B cell (primary cell): ENCODE measurements at regions of chr22 and their contacts with region 1.

Region 1: GRCh38 chr22:21629262-21630149 is at the start of gene YDJC:
- DNase-seq: peak; percentile 96
- ATAC-seq: peak; percentile 86
- H3K4me3 ChIP-seq: peak within 1 kb of the TSS; percentile 6 to 100 (median 99)
- H3K4me3 Mint-ChIP-seq: peak within 1 kb of the TSS; percentile 94
- H3K27ac ChIP-seq: peak within 1 kb of the TSS; percentile 91 to 92
- H3K27ac Mint-ChIP-seq: peak within 1 kb of the TSS; percentile 94
- H3K4me1 ChIP-seq: peaks cover 23 to 40% of the 10 kb centered on the region in 2 donors
- H3K4me1 Mint-ChIP-seq: peaks cover 46% of the 10 kb centered on the region
- H3K27me3 ChIP-seq: no peaks in the 10 kb centered on the region
- H3K27me3 Mint-ChIP-seq: no peaks in the 10 kb centered on the region
- CTCF ChIP-seq: peak; percentile 61
- total RNA-seq, gene YDJC: 46.6 and 48.8 TPM in 2 replicates

Region 2: DNA sequence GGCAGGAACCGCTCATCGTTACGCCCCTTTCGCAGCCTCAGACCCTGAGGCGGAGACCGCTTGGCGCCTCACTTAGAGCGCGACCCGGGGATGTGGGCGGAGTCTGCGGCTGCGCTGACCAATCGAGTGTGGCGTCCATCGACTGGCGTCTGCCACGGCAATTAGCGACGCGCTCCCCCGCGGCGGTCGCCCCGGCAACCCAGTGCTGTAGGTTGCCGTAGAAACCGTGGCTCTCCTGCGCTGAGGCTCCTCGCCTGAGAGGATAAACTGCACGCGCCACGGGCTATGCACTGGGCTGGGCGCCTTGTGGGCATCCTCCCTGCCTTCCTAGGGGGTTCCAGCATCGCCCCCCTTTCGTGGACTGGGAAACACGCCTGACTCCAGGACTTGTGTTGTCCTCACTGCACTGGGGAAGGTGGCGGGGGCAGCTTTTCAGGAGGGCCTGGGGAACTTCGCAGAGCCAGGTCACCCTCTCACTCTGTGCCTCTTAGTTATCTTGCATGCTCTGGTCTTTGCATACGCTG is 615.2 kb before region 1 on chr22:
- CTCF ChIA-PET with region 1: no interaction called
- POLR2A ChIA-PET with region 1: interaction called, 11 read pairs
- intact Hi-C with region 1: no loop called
- DNase-seq: peak; percentile 95
- ATAC-seq: peak; percentile 95
- H3K4me3 ChIP-seq: peak overlapping the region in 4 of 5 experiments; percentile 45 to 57 (median 52)
- H3K4me3 Mint-ChIP-seq: peak overlapping the region; percentile 94
- H3K27ac ChIP-seq: peak overlapping the region; percentile 73 to 74
- H3K27ac Mint-ChIP-seq: peak overlapping the region; percentile 91
- H3K4me1 ChIP-seq: peaks cover 14 to 24% of the 10 kb centered on the region in 2 donors
- H3K4me1 Mint-ChIP-seq: peaks cover 24% of the 10 kb centered on the region
- H3K27me3 ChIP-seq: no peaks in the 10 kb centered on the region
- H3K27me3 Mint-ChIP-seq: no peaks in the 10 kb centered on the region
- CTCF ChIP-seq: no peak

Region 3: GRCh38 chr22:21567456-21568346 is 61.8 kb before region 1 on chr22 and contains the start of gene UBE2L3:
- CTCF ChIA-PET with region 1: interaction called, 5 read pairs
- POLR2A ChIA-PET with region 1: no interaction called
- intact Hi-C with region 1: loop called (anchors 1 kb)
- DNase-seq: peak; percentile 90
- ATAC-seq: peak; percentile 92
- H3K4me3 ChIP-seq: peak within 1 kb of the TSS; percentile 70 to 91 (median 76)
- H3K4me3 Mint-ChIP-seq: peak within 1 kb of the TSS; percentile 90
- H3K27ac ChIP-seq: peak within 1 kb of the TSS; percentile 81 to 93
- H3K27ac Mint-ChIP-seq: peak within 1 kb of the TSS; percentile 84
- H3K4me1 ChIP-seq: peaks cover 27 to 34% of the 10 kb centered on the region in 2 donors
- H3K4me1 Mint-ChIP-seq: peaks cover 35% of the 10 kb centered on the region
- H3K27me3 ChIP-seq: no peaks in the 10 kb centered on the region
- H3K27me3 Mint-ChIP-seq: no peaks in the 10 kb centered on the region
- CTCF ChIP-seq: no peak
- total RNA-seq, gene UBE2L3: 28.6 and 30.9 TPM in 2 replicates

Region 4: DNA sequence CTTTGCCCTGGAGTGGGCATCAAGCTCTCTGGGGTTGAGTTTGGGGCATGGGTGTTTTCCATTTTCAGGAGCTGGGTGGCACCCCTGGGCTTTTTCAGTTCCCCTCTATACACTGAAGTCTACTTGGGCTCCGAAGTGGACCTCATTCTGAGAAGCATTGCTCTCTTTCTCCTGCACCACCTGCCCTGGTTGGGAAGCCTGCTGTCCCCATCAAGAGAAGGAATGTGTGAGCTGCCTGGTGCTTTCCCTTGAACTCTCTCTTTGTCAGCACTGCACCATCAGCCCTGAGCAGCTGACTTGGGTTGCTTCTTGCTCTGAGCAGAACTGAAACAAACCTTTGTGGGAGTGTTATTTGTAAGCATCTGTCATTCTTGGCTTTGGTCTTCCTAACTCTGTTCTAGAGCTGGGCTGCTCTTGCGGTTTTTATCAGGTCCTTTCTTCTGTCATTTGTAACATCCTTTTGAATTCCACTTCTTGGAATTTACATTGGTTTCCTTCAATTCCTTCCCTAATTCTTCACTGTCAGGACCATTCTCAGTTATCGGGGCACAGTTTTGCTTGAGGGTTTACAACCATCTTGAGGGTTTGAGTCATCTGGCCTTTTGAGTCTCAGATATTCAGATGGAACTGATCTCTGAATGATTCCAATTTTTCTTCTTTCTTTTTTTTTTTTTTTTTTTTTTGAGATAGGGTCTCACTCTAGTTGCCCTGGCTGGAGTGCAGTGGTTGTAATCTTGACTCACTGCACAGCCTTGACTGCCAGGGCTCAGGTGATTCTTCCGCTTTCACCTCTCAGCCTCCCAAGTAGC is 41.5 kb before region 1 on chr22:
- CTCF ChIA-PET with region 1: interaction called, 12 read pairs
- POLR2A ChIA-PET with region 1: interaction called, 3 read pairs
- intact Hi-C with region 1: loop called (anchors 5 kb)
- DNase-seq: peak; percentile 74
- ATAC-seq: peak; percentile 76
- H3K4me3 ChIP-seq: peak overlapping the region in 1 of 5 experiments; percentile 33
- H3K4me3 Mint-ChIP-seq: peak overlapping the region; percentile 76
- H3K27ac ChIP-seq: peak overlapping the region; percentile 60 to 63
- H3K27ac Mint-ChIP-seq: peak overlapping the region; percentile 86
- H3K4me1 ChIP-seq: peaks cover 36 to 50% of the 10 kb centered on the region in 2 donors
- H3K4me1 Mint-ChIP-seq: peaks cover 58% of the 10 kb centered on the region
- H3K27me3 ChIP-seq: no peaks in the 10 kb centered on the region
- H3K27me3 Mint-ChIP-seq: no peaks in the 10 kb centered on the region
- CTCF ChIP-seq: no peak

Region 5: DNA sequence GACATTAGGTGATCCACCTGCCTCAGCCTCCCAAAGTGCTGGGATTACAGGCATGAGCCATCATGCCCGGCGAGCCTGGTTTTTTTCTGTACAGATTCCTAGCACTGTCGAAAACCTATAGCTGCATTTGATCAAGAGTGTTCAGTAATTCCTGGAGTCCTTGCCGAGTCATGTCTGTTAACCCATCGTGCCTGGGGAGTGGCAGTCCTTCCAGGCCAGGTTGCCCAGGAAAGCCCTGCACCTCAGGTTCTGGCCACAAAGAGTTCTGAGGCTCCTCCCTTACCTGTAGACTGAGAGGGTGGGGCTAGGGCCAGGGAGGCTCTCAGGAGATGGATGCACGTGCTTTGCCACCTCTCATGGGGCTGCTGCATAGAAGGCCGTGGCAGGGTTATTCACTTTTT is 16.6 kb before region 1 on chr22:
- CTCF ChIA-PET with region 1: interaction called, 21 read pairs
- POLR2A ChIA-PET with region 1: interaction called, 10 read pairs
- intact Hi-C with region 1: no loop called
- DNase-seq: no peak
- ATAC-seq: no peak
- H3K4me3 ChIP-seq: no peak overlapping the region
- H3K4me3 Mint-ChIP-seq: no peak overlapping the region
- H3K27ac ChIP-seq: no peak overlapping the region
- H3K27ac Mint-ChIP-seq: peak overlapping the region; percentile 26
- H3K4me1 ChIP-seq: peaks cover 12 to 33% of the 10 kb centered on the region in 2 donors
- H3K4me1 Mint-ChIP-seq: peaks cover 41% of the 10 kb centered on the region
- H3K27me3 ChIP-seq: no peaks in the 10 kb centered on the region
- H3K27me3 Mint-ChIP-seq: no peaks in the 10 kb centered on the region
- CTCF ChIP-seq: no peak

Region 6: DNA sequence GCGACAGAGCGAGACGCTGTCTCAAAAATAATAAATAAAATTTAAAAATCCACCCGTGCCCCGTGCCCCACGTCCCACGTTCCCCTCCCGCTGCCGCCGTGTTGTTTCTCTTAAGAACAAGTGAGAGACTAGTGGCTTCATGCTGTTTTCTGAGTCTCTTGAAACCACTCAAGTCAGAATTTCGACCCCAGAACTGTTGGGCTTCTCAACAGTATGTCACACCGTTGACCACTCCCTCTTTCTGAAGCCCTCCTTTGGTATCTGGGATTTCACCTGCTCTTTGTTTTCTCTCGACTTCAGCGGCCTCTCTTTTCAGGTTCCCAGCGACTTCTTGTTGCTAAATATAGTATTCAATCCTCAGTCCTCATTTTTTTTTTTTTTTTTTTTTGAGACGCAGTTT is 37.3 kb after region 1 on chr22:
- CTCF ChIA-PET with region 1: interaction called, 6 read pairs
- POLR2A ChIA-PET with region 1: interaction called, 12 read pairs
- intact Hi-C with region 1: loop called (anchors 1 kb)
- DNase-seq: no peak
- ATAC-seq: no peak
- H3K4me3 ChIP-seq: peak overlapping the region in 4 of 5 experiments; percentile 77 to 96 (median 90)
- H3K4me3 Mint-ChIP-seq: peak overlapping the region; percentile 96
- H3K27ac ChIP-seq: peak overlapping the region in 1 of 2 donors; percentile 92
- H3K27ac Mint-ChIP-seq: peak overlapping the region; percentile 69
- H3K4me1 ChIP-seq: peaks cover 8 to 17% of the 10 kb centered on the region in 2 donors
- H3K4me1 Mint-ChIP-seq: peaks cover 28% of the 10 kb centered on the region
- H3K27me3 ChIP-seq: no peaks in the 10 kb centered on the region
- H3K27me3 Mint-ChIP-seq: no peaks in the 10 kb centered on the region
- CTCF ChIP-seq: no peak